Adrenal gland (tissue), 19 donors: ENCODE measurements at regions of chr17 and their contacts with region 1.

Region 1: GRCh38 chr17:42677008-42677857 is 439 bp upstream of the PLEKHH3 start:
- DNase-seq: peak; percentile 100
- H3K4me3 ChIP-seq: peak overlapping the region in 3 of 4 donors; percentile 30 to 95 (median 94)
- H3K27ac ChIP-seq: peak overlapping the region; percentile 84 to 96 (median 91)
- H3K4me1 ChIP-seq: peaks cover 47 to 72% of the 10 kb centered on the region in 2 donors
- H3K27me3 ChIP-seq: no peaks in the 10 kb centered on the region
- CTCF ChIP-seq: no peak
- POLR2A ChIP-seq: no peak

Region 2: DNA sequence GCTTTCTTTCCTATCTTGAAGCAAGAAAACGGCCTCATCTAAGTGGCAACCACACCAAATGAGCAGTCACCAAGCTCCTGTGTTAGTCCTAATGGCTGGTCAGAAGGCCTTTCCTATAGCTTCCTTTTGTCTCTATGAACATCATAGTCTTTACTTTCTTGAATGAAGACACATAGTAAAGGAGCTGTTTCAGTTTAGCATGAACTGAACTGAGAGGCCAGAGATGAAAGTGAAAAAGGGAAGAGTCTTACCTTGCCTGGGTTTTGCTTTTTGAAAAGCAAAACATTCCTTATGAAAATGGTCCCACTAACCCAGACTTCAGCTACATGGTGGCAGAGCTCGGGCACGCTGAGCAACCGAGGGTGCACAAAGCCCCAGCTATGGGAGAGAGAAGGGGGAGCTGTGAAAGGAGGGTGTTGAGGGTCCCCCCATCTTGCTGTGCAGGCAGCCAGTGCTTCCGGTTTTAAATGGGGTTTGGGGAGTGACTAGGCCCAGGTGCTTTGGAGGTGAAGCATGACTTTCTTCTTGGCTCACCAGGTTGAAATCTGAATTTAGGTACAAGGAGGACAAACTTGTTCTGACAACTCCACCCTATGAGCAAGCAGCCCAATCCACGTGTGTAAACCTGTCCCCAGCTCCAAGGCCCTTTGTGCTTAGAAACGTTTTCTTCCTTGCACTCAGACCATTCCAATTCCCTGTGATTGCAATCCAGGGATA is 90.6 kb before region 1 on chr17:
- intact Hi-C with region 1: loop called (anchors 5 to 10 kb)
- DNase-seq: peak in 1 of 7 donors; percentile 18
- H3K4me3 ChIP-seq: no peak overlapping the region
- H3K27ac ChIP-seq: no peak overlapping the region
- H3K4me1 ChIP-seq: no peaks in the 10 kb centered on the region
- H3K27me3 ChIP-seq: no peaks in the 10 kb centered on the region
- CTCF ChIP-seq: no peak
- POLR2A ChIP-seq: no peak

Region 3: GRCh38 chr17:42609182-42609813 is 67.9 kb before region 1 on chr17 and contains the starts of genes RETREG3 and TUBG1:
- intact Hi-C with region 1: loop called in 1 of 2 experiments (anchors 5 kb)
- DNase-seq: peak; percentile 98 to 99 (median 98)
- H3K4me3 ChIP-seq: peak within 1 kb of the TSS; percentile 86 to 97 (median 90)
- H3K27ac ChIP-seq: peak within 1 kb of the TSS; percentile 63 to 94 (median 81)
- H3K4me1 ChIP-seq: peaks cover 22 to 31% of the 10 kb centered on the region in 2 donors
- H3K27me3 ChIP-seq: no peaks in the 10 kb centered on the region
- CTCF ChIP-seq: peak in 5 of 6 experiments; percentile 19 to 44 (median 24)
- POLR2A ChIP-seq: peak; percentile 65 to 82
- total RNA-seq, gene RETREG3: 57.6 to 167 (median 81.6) TPM
- total RNA-seq, gene TUBG1: 22.9 to 90.0 (median 39.2) TPM